Activated CD8-positive, alpha-beta T cell treated with anti-CD3 and anti-CD28 coated beads for 36 hours (primary cell): ENCODE measurements at regions of chrX and their contacts with region 1.

Region 1: GRCh38 chrX:46573331-46573891 is at the start of gene CHST7:
- DNase-seq: peak; percentile 68
- ATAC-seq: peak; percentile 56
- H3K4me3 Mint-ChIP-seq: peak within 1 kb of the TSS; percentile 75
- H3K27ac Mint-ChIP-seq: peak within 1 kb of the TSS; percentile 91
- H3K4me1 Mint-ChIP-seq: peaks cover 38% of the 10 kb centered on the region
- H3K27me3 Mint-ChIP-seq: peaks cover 3% of the 10 kb centered on the region
- CTCF ChIP-seq: no peak
- total RNA-seq, gene CHST7: 2.5 to 2.8 TPM

Region 2: DNA sequence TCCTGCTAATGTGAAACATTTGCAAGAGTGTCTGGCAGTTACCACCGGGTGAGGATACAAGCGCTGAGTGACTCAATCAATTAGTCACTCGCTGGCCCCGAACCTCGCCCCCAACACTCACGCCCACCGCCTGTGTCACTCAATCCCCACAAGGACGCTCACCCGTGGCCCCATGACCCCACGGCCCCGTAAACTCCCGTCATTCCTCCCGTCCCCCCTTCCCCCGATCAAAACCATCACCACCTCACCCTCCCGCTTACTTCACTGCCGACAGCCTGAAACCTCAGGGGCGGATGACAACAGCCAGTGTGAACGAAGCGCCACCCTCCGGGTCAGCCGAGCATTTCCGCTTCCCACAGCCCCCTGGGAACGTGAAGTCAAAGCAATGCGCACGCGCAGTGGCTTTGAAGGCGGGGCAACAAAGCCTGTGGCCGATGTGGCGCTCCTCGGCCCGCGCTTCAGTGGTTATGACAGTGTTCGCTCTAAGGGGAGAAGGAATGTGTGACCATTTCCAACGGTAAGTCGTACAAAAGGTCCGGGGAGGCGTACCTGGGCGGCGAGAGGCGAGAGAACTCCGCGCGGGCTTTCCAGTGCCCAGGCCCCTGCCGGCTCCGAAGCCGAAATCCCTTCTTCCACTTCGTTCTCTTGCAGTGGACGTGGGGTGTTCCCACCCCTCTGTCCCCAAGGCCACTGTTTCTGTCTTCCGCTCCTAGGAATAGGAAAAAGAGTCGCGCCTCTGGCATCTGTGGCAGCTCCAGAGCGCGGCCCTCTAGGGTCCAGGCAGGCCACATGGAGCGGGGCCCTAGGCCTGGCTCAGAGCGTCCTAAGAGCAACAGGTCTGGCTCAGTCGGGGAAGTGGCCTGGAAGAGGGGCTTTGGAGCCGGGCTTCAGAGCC is 28.1 kb before region 1 on chrX and contains the start of gene ZNF674:
- CTCF ChIA-PET with region 1: interaction called, 3 read pairs
- POLR2A ChIA-PET with region 1: interaction called, 4 read pairs
- intact Hi-C with region 1: loop called (anchors 2 kb)
- DNase-seq: peak; percentile 95
- ATAC-seq: peak; percentile 89
- H3K4me3 Mint-ChIP-seq: peak within 1 kb of the TSS; percentile 87
- H3K27ac Mint-ChIP-seq: peak within 1 kb of the TSS; percentile 96
- H3K4me1 Mint-ChIP-seq: peaks cover 31% of the 10 kb centered on the region
- H3K27me3 Mint-ChIP-seq: no peaks in the 10 kb centered on the region
- CTCF ChIP-seq: peak; percentile 20
- total RNA-seq, gene ZNF674: 1.7 to 2.0 TPM